Posterior vena cava (tissue), 2 donors: ENCODE measurements at regions of chr17 and their contacts with region 1.

Region 1: DNA sequence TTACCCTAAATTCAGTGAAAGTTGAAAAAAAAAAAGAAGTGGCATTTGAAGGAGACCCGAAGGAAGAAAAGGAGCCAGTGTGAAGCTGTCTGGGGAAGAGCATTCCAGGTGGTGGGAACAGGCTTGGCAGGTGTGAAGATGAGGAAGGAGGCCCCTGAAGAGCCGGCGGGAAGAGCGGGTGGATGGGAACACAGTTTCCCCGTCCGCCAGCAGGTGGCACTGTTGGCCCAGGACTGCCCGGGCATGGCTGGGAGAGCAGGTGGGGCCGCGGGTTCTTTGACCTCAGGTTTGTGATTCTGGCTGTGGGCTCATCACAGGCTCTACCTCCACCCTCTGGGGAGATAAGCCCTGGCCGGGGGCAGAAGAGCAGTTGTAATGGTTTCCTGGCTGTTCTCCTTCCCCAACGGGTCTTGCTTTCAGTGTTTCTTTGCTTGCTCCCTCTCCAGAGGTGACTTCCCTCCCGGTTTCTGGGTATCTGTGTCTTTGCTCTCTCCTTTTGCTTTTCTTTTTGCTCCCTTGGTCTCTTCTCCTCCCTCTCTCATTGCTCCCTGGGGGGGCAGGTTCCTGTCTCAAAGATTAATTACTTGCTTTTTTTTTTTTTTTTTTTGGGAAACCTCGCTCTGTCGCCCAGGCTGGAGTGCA is 32.3 kb downstream of the RAP1GAP2 start:
- DNase-seq: peak; percentile 92

Region 2: GRCh38 chr17:2929881-2930533 is 101.5 kb after region 1 on chr17:
- intact Hi-C with region 1: loop called in 1 of 2 experiments (anchors 5 kb)
- DNase-seq: no peak

Region 3: GRCh38 chr17:3012926-3013581 is 184.5 kb after region 1 on chr17:
- intact Hi-C with region 1: loop called (anchors 5 kb)
- DNase-seq: peak; percentile 80